ENCODE measurements at regions of chr2 and their contacts with region 1.

Region 1: DNA sequence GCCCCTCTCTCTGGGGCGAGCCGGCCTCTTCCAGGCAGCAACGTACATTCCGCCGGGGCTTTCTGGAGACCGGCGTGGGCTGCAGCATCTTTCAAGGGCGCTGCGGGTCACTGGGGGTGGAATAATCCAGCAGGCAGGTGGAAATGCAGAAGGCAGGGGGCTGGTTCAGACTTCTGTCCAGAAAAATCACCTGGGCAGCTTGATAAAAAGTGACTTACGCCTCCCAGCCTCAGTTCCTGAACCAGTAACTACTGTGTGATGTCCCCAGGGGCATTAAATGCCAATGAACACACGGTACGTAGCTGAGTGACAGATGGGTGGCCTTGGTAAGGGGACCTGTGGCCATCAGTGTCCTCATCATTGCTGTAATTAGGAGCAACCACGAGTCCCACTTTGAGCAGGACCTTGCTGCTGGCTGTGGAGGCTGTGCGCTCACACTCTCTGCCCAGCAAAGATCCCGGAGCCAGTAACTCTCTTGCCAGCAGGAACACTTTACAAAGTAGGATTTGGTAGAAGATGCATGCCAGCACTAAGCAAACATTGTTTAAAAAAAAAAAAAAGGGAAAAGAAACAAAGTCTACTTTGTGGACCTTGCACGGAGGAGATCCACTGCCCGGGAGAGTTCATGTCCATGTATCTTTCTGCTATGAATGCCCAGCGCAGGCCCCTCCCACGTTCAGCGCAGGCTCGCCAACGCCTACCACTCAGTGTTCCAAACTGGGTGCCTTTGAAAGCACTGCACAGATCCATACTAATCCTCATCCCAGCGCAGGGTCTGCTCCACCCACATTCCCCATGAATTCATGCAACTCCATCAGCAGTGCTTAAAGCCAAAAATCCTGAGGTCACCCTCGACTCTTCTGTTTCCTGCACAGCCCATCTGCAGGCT is 177.3 kb downstream of the HDAC4 start:
- DNase-seq: peak; percentile 79
- ATAC-seq: peak; percentile 95
- H3K4me3 ChIP-seq: peak overlapping the region; percentile 48 to 68 (median 51); a peak in 5 of 6 replicates
- H3K27ac ChIP-seq: peak overlapping the region; percentile 59
- H3K4me1 ChIP-seq: peaks cover 30% of the 10 kb centered on the region
- H3K27me3 ChIP-seq: no peaks in the 10 kb centered on the region
- CTCF ChIP-seq: no peak
- EP300 ChIP-seq: peak in 1 of 2 experiments; percentile 57; a peak in 3 of 4 replicates
- POLR2A ChIP-seq: peak in 1 of 2 experiments; percentile 22; a peak in 1 of 4 replicates
- RAD21 ChIP-seq: no peak

Region 2: GRCh38 chr2:238784671-238785527 is 438.7 kb before region 1 on chr2:
- CTCF ChIA-PET with region 1: no interaction called
- POLR2A ChIA-PET with region 1: no interaction called
- in situ Hi-C with region 1: no loop called
- intact Hi-C with region 1: no loop called
- DNase-seq: peak; percentile 48
- ATAC-seq: peak; percentile 95
- H3K4me3 ChIP-seq: no peak overlapping the region
- H3K27ac ChIP-seq: no peak overlapping the region
- H3K4me1 ChIP-seq: no peaks in the 10 kb centered on the region
- H3K27me3 ChIP-seq: peaks cover 2 to 52% of the 10 kb centered on the region in 2 experiments
- CTCF ChIP-seq: peak; percentile 95
- EP300 ChIP-seq: no peak
- POLR2A ChIP-seq: no peak
- RAD21 ChIP-seq: peak; percentile 78

Region 3: GRCh38 chr2:239002954-239003588 is 220.5 kb before region 1 on chr2:
- CTCF ChIA-PET with region 1: no interaction called
- POLR2A ChIA-PET with region 1: no interaction called
- in situ Hi-C with region 1: no loop called
- intact Hi-C with region 1: no loop called
- DNase-seq: no peak
- ATAC-seq: no peak
- H3K4me3 ChIP-seq: no peak overlapping the region
- H3K27ac ChIP-seq: no peak overlapping the region
- H3K4me1 ChIP-seq: peaks cover 15% of the 10 kb centered on the region
- H3K27me3 ChIP-seq: peaks cover 12 to 68% of the 10 kb centered on the region in 2 experiments; a peak in 4 of 5 replicates
- CTCF ChIP-seq: no peak
- EP300 ChIP-seq: no peak
- POLR2A ChIP-seq: no peak
- RAD21 ChIP-seq: no peak

Region 4: DNA sequence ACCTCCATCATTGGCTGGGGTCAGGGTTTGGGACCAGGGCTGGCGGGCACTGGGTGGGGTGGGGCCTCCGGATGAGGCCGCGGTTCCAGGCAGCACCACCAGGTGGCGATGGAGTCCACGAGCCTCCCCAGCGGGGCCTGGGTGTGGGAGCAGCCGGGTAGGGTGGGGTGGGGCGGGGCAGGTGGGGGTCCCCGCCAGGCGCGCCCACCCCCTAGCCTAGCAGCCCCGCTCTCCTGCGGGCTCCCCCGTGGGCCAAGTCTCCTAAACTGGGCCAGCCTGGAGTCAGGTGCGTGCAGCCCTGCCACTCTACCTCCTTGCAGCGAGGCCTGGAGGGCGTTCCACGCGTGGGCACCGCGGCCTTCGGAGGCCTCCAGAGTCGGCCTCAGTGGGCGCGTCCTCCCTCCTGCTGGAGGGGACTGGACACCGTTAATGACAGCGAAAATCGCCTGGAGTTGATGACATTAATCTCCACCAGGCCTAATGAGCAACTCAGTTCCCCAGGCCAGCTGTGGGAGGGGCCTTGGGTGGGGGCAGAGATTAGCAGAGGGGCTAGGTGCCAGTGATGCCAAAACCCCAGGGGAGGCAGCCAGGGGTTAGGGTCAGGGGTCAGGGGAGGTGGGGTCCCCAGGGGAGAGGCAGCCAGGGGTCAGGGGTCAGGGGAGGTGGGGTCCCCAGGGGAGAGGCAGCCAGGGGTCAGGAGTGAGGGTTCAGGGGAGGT is 188.0 kb before region 1 on chr2:
- CTCF ChIA-PET with region 1: no interaction called
- POLR2A ChIA-PET with region 1: no interaction called
- in situ Hi-C with region 1: no loop called
- intact Hi-C with region 1: no loop called
- DNase-seq: no peak
- ATAC-seq: peak; percentile 80
- H3K4me3 ChIP-seq: peak overlapping the region in 1 of 3 experiments; percentile 15; a peak in 1 of 6 replicates
- H3K27ac ChIP-seq: no peak overlapping the region
- H3K4me1 ChIP-seq: peaks cover 13% of the 10 kb centered on the region
- H3K27me3 ChIP-seq: peaks cover 3 to 52% of the 10 kb centered on the region in 2 experiments
- CTCF ChIP-seq: peak; percentile 87
- EP300 ChIP-seq: no peak
- POLR2A ChIP-seq: no peak
- RAD21 ChIP-seq: peak; percentile 55

Region 5: DNA sequence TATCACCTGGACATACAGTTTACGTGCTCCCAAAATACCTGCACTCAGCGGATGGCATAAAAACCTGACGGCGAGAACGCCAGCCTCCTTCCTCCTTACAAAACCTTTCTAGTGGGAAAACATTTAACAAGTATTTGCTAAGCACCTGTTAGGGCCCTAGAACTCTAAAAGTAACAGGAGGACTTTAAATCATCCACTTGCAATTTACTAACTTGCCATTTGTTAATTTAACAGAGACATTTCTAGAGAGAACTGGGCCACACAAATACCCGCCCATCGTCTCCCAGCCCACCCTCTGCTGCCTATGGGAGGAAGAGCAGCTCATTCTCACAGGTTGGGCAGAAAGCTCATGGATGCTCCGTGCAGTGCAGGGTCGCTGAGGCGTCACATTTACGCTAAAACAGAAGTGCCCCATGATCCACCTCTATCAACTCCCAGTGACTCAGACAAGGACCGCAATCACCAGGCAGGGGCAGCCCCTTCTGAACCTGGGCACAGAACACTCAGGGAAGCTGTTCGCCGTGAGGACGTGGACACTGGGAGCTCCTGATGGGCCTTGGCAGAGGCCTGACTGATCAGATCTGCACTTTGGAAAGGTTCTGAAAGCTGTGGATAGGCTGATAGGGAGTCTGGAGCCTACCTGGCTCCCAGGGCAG is 70.3 kb after region 1 on chr2:
- CTCF ChIA-PET with region 1: no interaction called
- POLR2A ChIA-PET with region 1: interaction called, 3 read pairs
- in situ Hi-C with region 1: no loop called
- intact Hi-C with region 1: loop called (anchors 1 kb)
- DNase-seq: no peak
- ATAC-seq: no peak
- H3K4me3 ChIP-seq: no peak overlapping the region
- H3K27ac ChIP-seq: no peak overlapping the region
- H3K4me1 ChIP-seq: peaks cover 57% of the 10 kb centered on the region
- H3K27me3 ChIP-seq: no peaks in the 10 kb centered on the region
- CTCF ChIP-seq: no peak
- EP300 ChIP-seq: no peak
- POLR2A ChIP-seq: no peak
- RAD21 ChIP-seq: no peak